ENCODE measurements at regions of chr15 and their contacts with region 1.

Region 1: GRCh38 chr15:73989001-73989798 is 2.9 kb downstream of the STOML1 start:
- DNase-seq: peak; percentile 84

Region 2: GRCh38 chr15:73972984-73973682 is 16.1 kb before region 1 on chr15:
- intact Hi-C with region 1: no loop called
- DNase-seq: peak; percentile 94

Region 3: DNA sequence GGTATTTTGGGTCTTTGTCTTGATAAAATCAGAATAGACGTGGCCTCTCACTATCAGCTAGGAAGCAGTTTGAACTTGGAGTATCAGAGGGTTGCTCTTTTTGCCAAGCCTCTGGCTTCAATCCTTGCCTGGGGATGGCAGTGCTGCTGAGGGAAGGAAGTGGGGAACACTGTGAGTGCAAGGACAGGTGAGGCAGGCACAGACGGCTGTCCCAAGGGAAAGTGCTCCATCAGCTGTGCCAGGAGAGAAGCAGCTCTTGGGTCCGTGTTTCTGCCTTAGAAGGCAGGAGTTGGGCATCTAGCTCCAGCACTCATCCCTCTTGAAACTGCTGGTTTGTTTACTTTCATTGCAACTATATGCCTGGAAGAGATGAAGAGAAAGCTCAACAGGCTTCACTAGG is 38.5 kb after region 1 on chr15:
- intact Hi-C with region 1: loop called in 1 of 2 experiments (anchors 1 kb)
- DNase-seq: peak; percentile 28

Region 4: DNA sequence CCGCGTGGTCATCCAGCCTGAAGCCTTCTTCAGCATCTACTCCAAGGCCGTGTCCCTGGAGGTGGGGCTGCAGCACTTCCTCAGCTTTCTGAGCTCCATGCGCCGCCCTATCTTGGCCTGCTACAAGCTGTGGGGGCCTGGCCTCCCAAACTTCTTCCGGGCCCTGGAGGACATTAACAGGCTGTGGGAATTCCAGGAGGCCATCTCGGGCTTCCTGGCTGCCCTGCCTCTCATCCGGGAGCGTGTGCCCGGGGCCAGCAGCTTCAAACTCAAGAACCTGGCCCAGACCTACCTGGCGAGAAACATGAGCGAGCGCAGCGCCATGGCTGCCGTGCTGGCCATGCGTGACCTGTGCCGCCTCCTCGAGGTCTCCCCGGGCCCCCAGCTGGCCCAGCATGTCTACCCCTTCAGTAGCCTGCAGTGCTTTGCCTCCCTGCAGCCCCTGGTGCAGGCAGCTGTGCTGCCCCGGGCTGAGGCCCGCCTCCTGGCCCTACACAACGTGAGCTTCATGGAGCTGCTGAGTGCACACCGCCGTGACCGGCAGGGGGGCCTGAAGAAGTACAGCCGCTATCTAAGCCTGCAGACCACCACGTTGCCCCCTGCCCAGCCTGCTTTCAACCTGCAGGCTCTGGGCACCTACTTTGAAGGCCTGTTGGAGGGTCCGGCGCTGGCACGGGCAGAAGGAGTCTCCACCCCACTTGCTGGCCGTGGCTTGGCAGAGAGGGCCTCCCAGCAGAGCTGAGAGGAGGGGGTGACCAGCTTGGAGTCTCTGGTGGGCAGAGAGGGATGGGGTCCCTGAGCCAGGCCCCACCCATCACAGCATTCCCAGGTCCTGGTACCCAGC is 55.3 kb after region 1 on chr15:
- intact Hi-C with region 1: loop called in 1 of 2 experiments (anchors 5 kb)
- DNase-seq: peak; percentile 90